AG04449 (cell line): ENCODE measurements at regions of chr17 and their contacts with region 1.

Region 1: DNA sequence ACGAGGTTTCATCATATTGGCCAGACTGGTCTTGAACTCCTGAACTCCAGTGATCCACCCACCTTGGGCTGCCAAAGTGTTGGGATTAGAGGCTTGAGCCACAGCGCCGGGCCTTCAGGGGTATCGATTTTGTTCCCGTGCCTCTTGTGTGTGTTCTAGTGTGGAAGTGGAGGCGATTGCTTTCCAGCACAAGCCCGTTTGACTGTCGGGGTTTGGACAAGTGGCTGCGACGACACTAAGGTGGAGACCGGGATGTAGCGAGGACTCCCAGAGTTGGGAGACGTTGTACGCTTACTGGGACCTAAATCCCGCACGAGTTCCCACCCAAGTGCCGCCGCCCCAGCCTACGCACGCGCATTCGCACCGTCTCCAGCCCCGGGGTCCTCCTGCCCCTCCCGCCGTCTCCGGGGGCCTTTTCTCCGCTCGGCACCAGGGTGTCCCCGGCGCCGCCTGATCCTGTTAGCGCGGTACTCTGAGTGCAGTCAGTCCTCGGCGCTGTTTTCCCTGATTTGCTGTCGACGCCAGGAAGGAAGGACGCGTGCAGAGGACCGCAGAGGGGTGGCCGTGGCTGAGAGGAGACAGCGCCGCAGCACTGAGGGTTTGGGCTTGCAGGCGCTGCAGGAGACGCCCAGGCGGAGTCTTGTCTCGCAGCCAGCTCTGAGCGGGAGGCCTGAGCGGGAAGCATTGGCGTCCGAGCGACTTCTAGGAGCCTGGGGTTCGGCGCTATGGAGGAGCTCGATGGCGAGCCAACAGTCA is at the start of gene NUP85:
- DNase-seq: peak; percentile 31
- H3K4me3 ChIP-seq: peak within 1 kb of the TSS; percentile 100
- CTCF ChIP-seq: no peak

Region 2: GRCh38 chr17:75069783-75070182 is 135.4 kb before region 1 on chr17:
- CTCF ChIA-PET with region 1: interaction called, 120 read pairs
- POLR2A ChIA-PET with region 1: no interaction called
- DNase-seq: no peak
- H3K4me3 ChIP-seq: no peak overlapping the region
- CTCF ChIP-seq: peak; percentile 36

Region 3: DNA sequence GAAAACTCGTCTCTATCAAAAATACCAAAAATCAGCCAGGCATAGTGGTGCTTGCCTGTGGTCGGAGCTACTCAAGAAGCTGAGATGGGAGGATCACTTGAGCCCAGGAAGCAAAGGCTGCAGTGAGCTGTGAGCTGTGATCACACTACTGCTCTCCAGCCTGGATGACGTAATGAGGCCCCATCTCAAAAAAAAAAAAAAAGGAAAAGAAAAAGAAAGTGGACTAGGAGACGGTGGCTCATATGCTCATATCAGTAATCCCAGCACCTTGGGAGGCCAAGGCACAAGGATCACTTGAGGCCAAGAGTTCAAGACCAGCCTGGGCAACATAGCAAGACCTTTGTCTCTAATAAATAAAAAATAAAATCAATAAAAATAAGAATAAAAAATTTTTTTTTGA is 13.6 kb before region 1 on chr17:
- CTCF ChIA-PET with region 1: interaction called, 35 read pairs
- POLR2A ChIA-PET with region 1: no interaction called
- DNase-seq: no peak
- H3K4me3 ChIP-seq: no peak overlapping the region
- CTCF ChIP-seq: no peak

Region 4: GRCh38 chr17:75219815-75220214 is 14.6 kb after region 1 on chr17:
- CTCF ChIA-PET with region 1: interaction called, 13 read pairs
- POLR2A ChIA-PET with region 1: interaction called, 3 read pairs
- DNase-seq: no peak
- H3K4me3 ChIP-seq: no peak overlapping the region
- CTCF ChIP-seq: no peak